Activated naive CD4-positive, alpha-beta T cell treated with anti-CD3 and anti-CD28 coated beads, Interleukin-2, amount 10 ng/mL, durations not matched to agents 7 days and 5 days (primary cell): ENCODE measurements at regions of chr17 and their contacts with region 1.

Region 1: DNA sequence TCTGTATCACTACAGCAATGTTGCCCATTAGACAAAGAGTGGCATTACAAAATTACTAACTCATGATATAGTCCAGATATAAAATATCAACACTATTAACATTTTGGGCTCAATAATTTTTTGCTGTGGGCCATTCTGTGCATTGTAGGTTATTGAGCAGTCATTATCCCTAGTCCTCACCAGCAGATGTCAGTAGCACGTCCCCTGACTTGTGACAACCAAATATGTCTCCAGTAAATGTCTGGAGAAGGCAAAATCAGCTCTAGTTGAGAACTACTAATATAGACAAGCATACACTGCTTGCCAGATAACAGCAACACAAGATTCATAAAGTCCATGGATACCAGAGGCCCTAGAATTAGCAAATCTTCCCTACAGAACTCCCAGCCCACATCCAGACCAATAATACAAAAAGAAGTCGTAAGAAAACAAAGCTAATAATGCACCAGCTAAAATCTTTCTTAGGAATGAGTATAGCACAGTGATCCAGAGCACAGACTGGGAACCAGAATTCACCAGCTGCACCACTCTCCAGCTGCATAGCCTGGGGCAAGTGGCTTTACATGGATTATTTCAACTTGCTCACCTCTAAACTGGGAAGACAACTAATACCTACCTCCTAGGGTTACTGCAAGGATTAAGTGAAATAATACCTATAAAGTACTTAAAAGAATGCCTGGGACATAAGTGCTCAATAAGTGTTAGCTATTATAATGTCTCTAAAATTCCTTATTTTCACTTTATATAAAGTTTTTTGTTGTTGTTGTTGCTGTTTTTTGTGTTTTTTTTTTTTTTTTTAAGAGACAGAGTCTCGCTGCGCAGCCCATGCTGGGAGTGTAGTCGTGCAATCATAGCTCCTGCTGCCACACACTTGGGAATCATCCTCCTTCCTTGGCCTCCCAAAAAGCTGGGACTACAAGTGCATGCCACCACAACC is 23.7 kb downstream of the HELZ start:
- DNase-seq: peak; percentile 61
- H3K4me3 Mint-ChIP-seq: no peak overlapping the region
- H3K27ac Mint-ChIP-seq: no peak overlapping the region
- H3K4me1 Mint-ChIP-seq: peaks cover 13% of the 10 kb centered on the region
- H3K27me3 Mint-ChIP-seq: no peaks in the 10 kb centered on the region

Region 2: DNA sequence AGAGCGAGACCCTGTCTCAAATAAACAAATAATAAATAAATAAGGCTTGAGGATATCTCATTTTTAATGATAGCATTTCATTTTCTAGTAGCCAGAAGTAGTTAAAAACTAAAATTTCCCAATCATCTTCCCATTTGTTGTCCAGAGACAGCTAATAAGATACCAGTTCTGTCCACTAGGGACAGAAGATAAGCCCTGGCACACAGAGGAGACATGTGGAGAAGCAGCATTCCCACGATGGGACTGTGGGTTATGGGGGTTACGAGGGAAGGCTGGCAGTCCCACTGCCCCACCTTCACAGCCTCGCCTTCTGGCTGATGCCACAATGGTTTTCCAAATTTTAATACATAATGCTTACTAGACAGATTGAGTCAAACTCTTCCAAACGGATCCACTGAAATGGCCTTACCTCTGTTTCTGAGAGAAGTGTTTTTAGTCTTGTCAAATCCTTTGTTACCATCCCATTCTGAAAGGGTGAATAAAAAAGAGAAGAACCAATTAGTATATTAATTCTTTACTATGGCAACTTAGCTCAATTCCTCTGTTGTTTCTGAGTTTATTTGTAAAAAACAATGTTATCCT is 20.5 kb before region 1 on chr17:
- CTCF ChIA-PET with region 1: interaction called, 10 read pairs
- DNase-seq: no peak
- H3K4me3 Mint-ChIP-seq: no peak overlapping the region
- H3K27ac Mint-ChIP-seq: no peak overlapping the region
- H3K4me1 Mint-ChIP-seq: peaks cover 3% of the 10 kb centered on the region
- H3K27me3 Mint-ChIP-seq: no peaks in the 10 kb centered on the region

Region 3: DNA sequence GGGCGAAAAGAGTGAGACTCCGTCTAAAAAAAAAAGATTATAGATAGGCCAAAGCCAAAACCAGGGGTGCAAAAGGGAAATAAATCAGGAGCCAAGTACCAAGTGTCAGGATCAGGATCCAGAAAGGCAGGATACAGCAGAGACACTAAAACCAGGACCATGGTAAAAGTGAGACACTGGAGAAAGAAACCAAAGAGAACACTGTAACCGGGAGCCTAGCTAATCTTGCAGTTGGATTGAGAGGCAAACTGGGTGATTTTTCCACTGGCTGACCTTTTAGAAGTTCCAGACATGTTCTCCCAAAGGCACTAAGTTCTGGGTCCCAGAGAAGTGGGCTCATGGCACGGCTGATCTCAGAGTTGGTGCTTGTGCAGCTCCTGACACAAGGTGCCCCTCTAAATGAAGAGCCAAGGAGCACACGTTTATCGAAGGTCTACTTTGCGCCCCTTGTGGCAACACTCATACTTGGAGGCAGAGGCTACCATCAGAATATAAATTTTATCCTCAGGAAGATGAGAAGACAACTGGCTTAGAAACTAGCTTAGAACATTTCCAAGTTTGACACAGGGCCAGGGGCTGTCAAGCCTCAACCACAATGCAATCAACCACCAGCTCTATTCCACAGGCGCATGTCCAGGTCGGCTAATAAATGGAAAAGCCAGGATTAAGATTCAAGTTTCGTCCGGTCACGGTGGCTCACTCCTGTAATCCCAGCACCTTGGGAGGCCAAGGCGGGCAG is 51.2 kb after region 1 on chr17:
- CTCF ChIA-PET with region 1: interaction called, 11 read pairs
- DNase-seq: peak; percentile 24
- H3K4me3 Mint-ChIP-seq: no peak overlapping the region
- H3K27ac Mint-ChIP-seq: no peak overlapping the region
- H3K4me1 Mint-ChIP-seq: no peaks in the 10 kb centered on the region
- H3K27me3 Mint-ChIP-seq: peaks cover 4% of the 10 kb centered on the region

Region 4: DNA sequence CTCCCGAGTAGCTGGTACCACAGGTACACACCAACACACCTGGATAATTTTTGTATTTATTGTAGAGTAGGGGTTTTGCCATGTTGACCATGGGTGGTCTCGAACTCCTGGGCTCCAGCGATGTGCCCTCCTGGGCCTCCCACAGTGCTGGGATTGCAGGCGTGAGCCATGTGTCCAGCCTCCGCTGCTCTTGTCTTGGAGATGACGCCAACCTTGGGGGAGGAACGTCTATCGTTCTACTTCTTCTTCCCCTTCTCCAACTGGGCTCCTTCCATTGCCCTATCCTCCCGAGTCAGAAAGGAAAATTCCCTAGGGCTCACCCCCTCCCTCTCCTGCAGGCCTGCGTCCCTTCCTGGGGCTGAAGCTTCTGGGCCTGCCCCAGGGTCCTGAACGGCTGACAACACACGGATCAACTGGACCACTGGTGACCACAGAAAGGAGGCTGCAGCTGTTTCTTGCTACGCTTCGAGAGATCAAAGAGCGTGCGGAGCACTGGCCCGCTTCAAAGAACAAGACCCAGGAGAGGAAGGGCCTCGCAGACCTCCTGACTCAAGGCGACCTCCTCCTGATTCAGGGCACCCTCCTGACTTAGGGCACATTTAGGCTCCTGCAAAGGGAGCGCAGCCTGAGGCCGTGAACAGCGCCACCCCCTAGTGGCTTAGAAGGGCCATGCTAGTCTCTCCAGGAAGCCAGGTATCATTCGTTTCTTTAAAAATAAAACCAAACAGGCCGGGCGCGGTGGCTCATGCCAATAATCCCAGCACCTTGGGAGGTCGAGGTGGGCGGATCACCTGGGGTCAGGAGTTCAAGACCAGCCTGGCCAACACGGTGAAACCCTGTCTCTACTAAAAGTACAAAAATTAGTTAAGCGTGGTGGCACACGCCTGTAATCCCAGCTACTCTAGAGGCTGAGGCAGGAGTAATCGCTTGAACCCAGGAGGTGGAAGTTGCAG is 72.2 kb after region 1 on chr17:
- CTCF ChIA-PET with region 1: interaction called, 85 read pairs
- DNase-seq: peak; percentile 80
- H3K4me3 Mint-ChIP-seq: no peak overlapping the region
- H3K27ac Mint-ChIP-seq: no peak overlapping the region
- H3K4me1 Mint-ChIP-seq: no peaks in the 10 kb centered on the region
- H3K27me3 Mint-ChIP-seq: peaks cover 18% of the 10 kb centered on the region